Left ventricle myocardium superior (tissue), 1 donor: ENCODE measurements at regions of chr2 and their contacts with region 1.

Region 1: DNA sequence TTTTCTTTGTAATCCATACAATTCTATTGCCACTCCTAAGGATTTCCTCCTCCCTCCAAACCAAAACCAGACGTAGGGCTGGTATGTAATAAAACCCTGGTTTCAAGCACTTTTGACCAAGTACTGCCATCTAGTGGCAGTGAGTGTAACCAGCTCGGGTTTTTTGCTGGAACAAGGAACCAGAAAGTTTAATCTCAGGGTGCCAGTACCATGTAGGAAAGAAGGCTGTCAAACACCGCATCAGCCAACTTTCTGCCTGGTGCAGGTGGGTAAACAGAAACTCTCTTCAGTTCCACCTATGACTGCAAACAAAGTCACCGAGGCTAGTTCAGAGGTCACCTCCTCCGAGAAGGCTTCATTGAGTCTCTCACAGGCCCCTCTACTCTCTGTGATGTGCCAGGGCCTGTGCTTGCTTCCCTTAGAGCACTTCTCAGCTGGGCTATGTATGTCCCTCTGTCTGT is 10.2 kb upstream of the THNSL2 start:
- DNase-seq: peak; percentile 36
- ATAC-seq: peak; percentile 67

Region 2: DNA sequence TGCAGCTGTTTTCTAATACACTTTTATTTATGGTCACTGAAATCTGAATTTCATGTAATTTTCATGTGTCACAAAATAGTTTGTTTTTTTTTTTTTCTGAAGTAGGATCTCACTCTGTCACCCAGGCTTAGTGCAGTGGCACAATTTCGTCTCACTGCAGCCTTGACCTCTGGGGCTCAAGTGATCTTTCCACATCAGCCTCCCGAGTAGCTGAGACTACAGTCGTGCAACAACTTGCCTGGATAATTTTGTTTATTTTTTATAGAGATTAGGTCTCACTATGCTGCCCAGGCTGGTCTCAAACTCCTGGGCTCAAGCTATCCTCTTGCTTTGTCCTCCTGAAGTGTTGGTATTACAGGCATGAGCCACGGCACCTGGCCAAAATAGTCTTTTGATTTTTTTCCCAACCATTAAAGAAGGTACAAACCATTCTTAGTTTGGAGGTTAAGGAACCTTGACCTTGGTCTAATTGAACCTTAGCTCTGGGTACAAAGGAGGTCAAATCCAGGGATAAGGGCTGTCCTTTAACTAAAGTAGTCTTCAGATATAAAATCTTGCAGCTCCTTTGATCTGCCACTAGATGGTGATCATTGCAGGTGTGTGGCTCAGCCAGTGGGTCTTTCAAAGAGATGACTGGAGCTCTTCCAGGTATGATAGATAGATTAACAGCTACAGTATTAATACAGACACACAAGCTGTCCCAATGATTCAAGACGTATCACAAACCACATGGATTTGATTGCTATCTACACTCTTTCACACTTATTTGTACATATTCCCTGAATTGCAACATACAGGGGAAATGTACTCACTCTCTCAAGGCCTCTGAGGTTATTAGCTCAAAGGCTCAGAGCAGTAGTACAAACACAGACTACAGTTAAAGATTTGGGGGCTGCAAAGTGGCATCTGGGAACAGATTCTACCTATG is 99.7 kb before region 1 on chr2:
- intact Hi-C with region 1: loop called (anchors 5 kb)
- DNase-seq: no peak
- ATAC-seq: peak; percentile 27

Region 3: GRCh38 chr2:88144914-88145497 is 15.0 kb before region 1 on chr2:
- intact Hi-C with region 1: no loop called
- DNase-seq: no peak
- ATAC-seq: no peak

Region 4: DNA sequence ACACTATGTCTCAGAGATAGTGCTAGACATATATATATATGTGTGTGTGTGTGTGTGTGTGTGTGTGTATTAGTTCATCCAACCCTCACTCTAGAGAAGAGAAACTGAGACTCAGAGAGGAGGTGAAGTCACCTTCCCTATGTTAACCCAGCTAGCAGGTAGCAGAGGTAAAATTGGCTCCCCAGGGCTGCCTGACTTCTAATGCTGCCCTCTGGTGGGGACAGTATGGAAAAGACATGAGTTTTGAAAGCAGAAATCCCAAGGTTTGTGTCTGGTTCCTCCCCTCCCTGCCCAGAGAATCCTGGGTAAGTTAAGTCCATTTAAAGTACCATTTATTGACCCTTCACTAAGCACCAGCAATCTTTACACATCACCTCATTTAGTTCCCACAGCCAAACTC is 147.8 kb after region 1 on chr2:
- intact Hi-C with region 1: no loop called
- DNase-seq: no peak
- ATAC-seq: no peak

Region 5: DNA sequence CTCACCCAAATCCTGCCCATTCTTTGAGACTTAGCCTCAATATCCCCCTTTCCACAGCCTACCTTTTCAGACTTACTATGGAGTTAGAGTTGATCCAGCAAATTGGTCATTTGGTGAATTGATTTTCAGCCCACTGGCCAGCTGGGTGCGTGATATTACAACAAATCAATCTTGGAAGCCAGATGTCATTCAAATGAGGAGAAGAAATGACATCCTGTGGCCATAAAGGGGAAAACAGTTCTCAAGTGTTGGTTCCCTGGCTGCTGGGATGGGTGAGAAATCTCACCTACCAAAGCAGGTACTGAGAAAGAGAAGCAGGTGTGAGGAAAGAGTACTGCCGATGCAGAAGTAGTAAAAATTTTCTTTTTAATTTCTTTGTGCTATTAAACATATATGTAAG is 329.2 kb after region 1 on chr2:
- intact Hi-C with region 1: no loop called
- DNase-seq: no peak
- ATAC-seq: no peak